Right cardiac atrium (tissue), 5 donors: ENCODE measurements at regions of chr2 and their contacts with region 1.

Region 1: GRCh38 chr2:224369028-224369632 is 32.8 kb downstream of the FAM124B start:
- DNase-seq: no peak
- ATAC-seq: no peak
- H3K4me3 ChIP-seq: no peak overlapping the region
- H3K27ac ChIP-seq: no peak overlapping the region
- H3K4me1 ChIP-seq: no peaks in the 10 kb centered on the region
- H3K27me3 ChIP-seq: no peaks in the 10 kb centered on the region

Region 2: GRCh38 chr2:224449212-224450147 is 80.3 kb after region 1 on chr2:
- intact Hi-C with region 1: loop called in 1 of 4 experiments (anchors 10 kb)
- DNase-seq: no peak
- ATAC-seq: no peak
- H3K4me3 ChIP-seq: no peak overlapping the region
- H3K27ac ChIP-seq: no peak overlapping the region
- H3K4me1 ChIP-seq: no peaks in the 10 kb centered on the region
- H3K27me3 ChIP-seq: no peaks in the 10 kb centered on the region